ENCODE measurements at regions of chr10 and their contacts with region 1.

Region 1: DNA sequence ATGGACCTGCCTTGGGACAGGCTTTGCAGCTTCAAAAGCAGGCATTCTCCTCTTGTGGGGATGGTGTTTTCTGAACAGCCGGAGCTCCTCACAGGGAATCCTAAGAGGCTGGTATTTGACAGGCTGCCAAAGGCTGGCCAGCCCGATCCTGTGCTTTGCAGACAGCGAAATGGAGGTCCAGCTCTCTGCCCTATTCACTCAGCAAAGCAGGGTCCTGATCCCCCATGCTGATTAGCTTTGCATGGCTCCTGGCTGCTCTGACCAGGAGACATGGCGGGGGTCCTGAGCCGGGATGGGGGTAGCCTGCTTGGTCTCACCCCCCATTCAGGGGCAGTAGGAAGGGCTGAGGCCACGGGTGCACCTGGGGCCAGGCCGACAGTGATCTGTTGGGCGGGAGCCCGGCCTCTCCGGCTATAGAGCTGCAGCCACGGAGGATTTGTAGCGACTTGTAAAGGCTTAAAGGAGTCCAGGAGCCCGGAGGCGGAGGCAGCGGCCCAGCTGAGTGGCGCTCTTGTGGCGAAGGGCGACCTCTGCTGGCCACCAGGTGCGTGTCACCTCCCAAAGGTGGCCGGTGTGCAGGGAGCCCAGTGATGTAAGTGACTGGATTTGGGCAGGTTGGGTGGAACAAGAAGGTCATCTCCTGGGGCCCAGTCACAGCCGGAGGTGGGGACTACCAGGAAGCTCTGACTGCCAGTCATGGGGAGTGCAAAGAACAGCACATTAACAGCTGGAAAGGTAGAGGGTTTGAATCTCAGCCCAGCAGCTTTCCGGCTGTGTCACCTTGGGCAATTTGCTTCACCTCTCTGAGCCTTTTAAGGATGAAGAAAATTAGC is 126.5 kb downstream of the ZMIZ1 start:
- DNase-seq: peak; percentile 89
- ATAC-seq: peak; percentile 93
- H3K4me3 Mint-ChIP-seq: no peak overlapping the region
- H3K27ac Mint-ChIP-seq: no peak overlapping the region
- H3K4me1 Mint-ChIP-seq: no peaks in the 10 kb centered on the region
- H3K27me3 Mint-ChIP-seq: no peaks in the 10 kb centered on the region

Region 2: GRCh38 chr10:78047314-78047891 is 1147.9 kb before region 1 on chr10:
- CTCF ChIA-PET with region 1: interaction called, 45 read pairs
- POLR2A ChIA-PET with region 1: no interaction called
- intact Hi-C with region 1: loop called (anchors 1 kb)
- DNase-seq: peak; percentile 91
- ATAC-seq: peak; percentile 81
- H3K4me3 Mint-ChIP-seq: no peak overlapping the region
- H3K27ac Mint-ChIP-seq: no peak overlapping the region
- H3K4me1 Mint-ChIP-seq: peaks cover 23% of the 10 kb centered on the region
- H3K27me3 Mint-ChIP-seq: no peaks in the 10 kb centered on the region

Region 3: DNA sequence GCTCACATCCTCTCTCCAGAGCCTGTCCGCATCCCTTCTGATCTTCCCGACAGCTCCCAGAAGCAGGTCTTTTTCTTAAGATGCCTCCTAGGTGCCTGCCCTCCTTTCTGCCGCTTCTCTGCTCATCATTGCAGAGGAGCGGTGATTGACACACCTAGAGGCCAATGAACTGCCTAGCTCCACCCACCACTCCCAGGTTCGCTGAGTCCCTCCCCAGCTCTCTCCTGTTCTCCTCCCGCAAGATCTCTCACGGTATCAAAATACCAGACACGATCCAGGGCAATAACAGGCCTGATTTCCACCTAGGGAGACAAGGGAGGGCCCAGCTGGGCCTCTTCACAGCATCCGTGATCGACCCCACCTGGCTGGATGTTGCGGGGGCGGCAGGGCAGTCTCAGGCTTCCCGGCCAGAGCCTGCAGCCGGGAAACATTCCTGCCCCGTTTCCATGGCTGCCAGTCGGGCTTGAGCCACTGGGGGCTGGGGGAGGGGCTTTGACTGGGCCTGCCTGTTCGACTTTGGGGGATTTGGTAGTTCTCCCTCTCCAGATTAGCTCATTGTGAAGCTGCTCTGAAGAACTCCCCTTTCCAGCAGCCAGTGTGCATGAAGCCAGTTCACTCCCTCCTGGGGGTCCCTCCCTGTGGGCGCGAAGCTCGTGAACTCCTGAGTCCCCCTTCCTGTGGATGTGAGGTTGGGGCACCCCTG is 788.1 kb before region 1 on chr10:
- CTCF ChIA-PET with region 1: no interaction called
- POLR2A ChIA-PET with region 1: no interaction called
- intact Hi-C with region 1: loop called in 1 of 2 experiments (anchors 5 kb)
- DNase-seq: peak; percentile 83
- ATAC-seq: peak; percentile 99
- H3K4me3 Mint-ChIP-seq: peak overlapping the region; percentile 58
- H3K27ac Mint-ChIP-seq: no peak overlapping the region
- H3K4me1 Mint-ChIP-seq: peaks cover 4% of the 10 kb centered on the region
- H3K27me3 Mint-ChIP-seq: peaks cover 9% of the 10 kb centered on the region

Region 4: GRCh38 chr10:78852466-78853240 is 342.7 kb before region 1 on chr10:
- CTCF ChIA-PET with region 1: interaction called, 5 read pairs
- POLR2A ChIA-PET with region 1: no interaction called
- intact Hi-C with region 1: loop called (anchors 1 to 10 kb)
- DNase-seq: peak; percentile 34
- ATAC-seq: peak; percentile 42
- H3K4me3 Mint-ChIP-seq: no peak overlapping the region
- H3K27ac Mint-ChIP-seq: no peak overlapping the region
- H3K4me1 Mint-ChIP-seq: no peaks in the 10 kb centered on the region
- H3K27me3 Mint-ChIP-seq: no peaks in the 10 kb centered on the region

Region 5: DNA sequence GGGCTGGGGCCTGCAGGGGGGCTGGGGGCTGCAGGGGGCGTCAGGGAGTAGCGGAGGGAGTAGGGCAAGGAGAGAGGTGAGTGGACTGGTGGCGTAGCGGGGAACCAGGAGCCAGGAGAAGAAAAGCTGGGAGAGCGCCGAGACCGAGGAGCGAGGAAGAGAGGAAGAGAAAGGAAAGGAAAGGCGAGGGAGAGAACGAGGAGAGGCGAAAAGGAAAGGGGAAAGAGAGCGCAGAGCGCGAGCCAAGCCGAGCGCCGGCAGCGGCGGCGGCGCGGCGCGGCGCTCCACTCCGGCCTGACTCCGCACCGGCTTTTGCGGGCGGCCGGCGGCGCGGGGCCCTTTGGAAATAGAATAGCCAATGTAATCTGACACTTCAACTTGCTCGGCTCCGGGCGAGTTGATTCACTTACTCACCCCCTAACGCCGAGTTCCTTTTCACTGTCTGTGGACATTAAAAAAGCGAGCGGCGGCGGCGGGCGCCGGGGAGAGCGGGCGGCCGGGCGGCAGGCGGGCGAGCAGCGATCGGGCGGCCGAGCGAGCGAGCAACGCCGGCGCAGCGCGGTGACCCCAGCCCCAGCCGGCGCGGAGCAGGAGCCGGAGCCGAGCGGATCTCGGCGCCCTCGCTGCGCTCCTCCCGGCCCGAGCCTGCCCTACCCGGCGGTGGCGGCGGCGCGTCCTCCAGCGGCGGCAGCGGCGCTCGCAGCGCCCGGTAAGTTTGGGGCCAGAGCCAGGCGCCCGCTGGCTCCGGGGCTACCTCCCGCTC is 126.6 kb before region 1 on chr10 and contains the start of gene ZMIZ1:
- CTCF ChIA-PET with region 1: interaction called, 6 read pairs
- POLR2A ChIA-PET with region 1: no interaction called
- intact Hi-C with region 1: loop called (anchors 1 to 5 kb)
- DNase-seq: peak; percentile 89
- ATAC-seq: peak; percentile 72
- H3K4me3 Mint-ChIP-seq: peak within 1 kb of the TSS; percentile 73
- H3K27ac Mint-ChIP-seq: peak within 1 kb of the TSS; percentile 58
- H3K4me1 Mint-ChIP-seq: peaks cover 32% of the 10 kb centered on the region
- H3K27me3 Mint-ChIP-seq: peaks cover 3% of the 10 kb centered on the region
- total RNA-seq, gene ZMIZ1: 33.9 to 34.3 TPM

Measured in activated CD4-positive, alpha-beta T cell treated with anti-CD3 and anti-CD28 coated beads for 36 hours (primary cell).